Thyroid gland (tissue), 4 donors: ENCODE measurements at regions of chr1 and their contacts with region 1.

Region 1: GRCh38 chr1:159936273-159936904 is 9.0 kb downstream of the IGSF9 start:
- DNase-seq: peak; percentile 66 to 75
- H3K4me3 ChIP-seq: no peak overlapping the region
- H3K27ac ChIP-seq: no peak overlapping the region
- H3K4me1 ChIP-seq: peaks cover 0 to 14% of the 10 kb centered on the region in 2 donors
- H3K27me3 ChIP-seq: no peaks in the 10 kb centered on the region
- CTCF ChIP-seq: peak; percentile 82 to 97 (median 97)
- POLR2A ChIP-seq: no peak

Region 2: GRCh38 chr1:160004001-160004400 is 67.6 kb after region 1 on chr1:
- intact Hi-C with region 1: loop called (anchors 2 kb)
- DNase-seq: no peak
- H3K4me3 ChIP-seq: no peak overlapping the region
- H3K27ac ChIP-seq: no peak overlapping the region
- H3K4me1 ChIP-seq: no peaks in the 10 kb centered on the region
- H3K27me3 ChIP-seq: no peaks in the 10 kb centered on the region
- CTCF ChIP-seq: no peak
- POLR2A ChIP-seq: no peak